H1 (cell line): ENCODE measurements at regions of chr12 and their contacts with region 1.

Region 1: GRCh38 chr12:3821441-3821840 is 51.8 kb downstream of the PARP11 start:
- DNase-seq: no peak
- H3K4me3 ChIP-seq: peak overlapping the region in 1 of 4 experiments; percentile 39; a peak in 2 of 8 replicates
- H3K27ac ChIP-seq: no peak overlapping the region
- H3K4me1 ChIP-seq: peaks cover 0 to 5% (median 2%) of the 10 kb centered on the region in 4 experiments; a peak in 2 of 7 replicates
- H3K27me3 ChIP-seq: no peaks in the 10 kb centered on the region
- CTCF ChIP-seq: no peak
- EP300 ChIP-seq: no peak
- POLR2A ChIP-seq: no peak
- RAD21 ChIP-seq: no peak

Region 2: GRCh38 chr12:3832738-3833137 is 11.3 kb after region 1 on chr12:
- CTCF ChIA-PET with region 1: interaction called, 15 read pairs
- POLR2A ChIA-PET with region 1: interaction called, 5 read pairs
- DNase-seq: no peak
- H3K4me3 ChIP-seq: no peak overlapping the region
- H3K27ac ChIP-seq: no peak overlapping the region
- H3K4me1 ChIP-seq: peaks cover 0 to 7% (median 2%) of the 10 kb centered on the region in 4 experiments; a peak in 5 of 7 replicates
- H3K27me3 ChIP-seq: no peaks in the 10 kb centered on the region
- CTCF ChIP-seq: no peak
- EP300 ChIP-seq: no peak
- POLR2A ChIP-seq: no peak
- RAD21 ChIP-seq: no peak